PC-3 (cell line): ENCODE measurements at regions of chr16 and their contacts with region 1.

Region 1: GRCh38 chr16:71669932-71670536 is 44.0 kb downstream of the MARVELD3 start:
- DNase-seq: no peak
- ATAC-seq: no peak
- H3K4me3 ChIP-seq: no peak overlapping the region
- H3K27ac ChIP-seq: no peak overlapping the region
- H3K4me1 ChIP-seq: peaks cover 7% of the 10 kb centered on the region; the same call in 1 of the 2 replicates
- H3K27me3 ChIP-seq: no peaks in the 10 kb centered on the region
- CTCF ChIP-seq: no peak

Region 2: GRCh38 chr16:71626858-71627213 is 43.2 kb before region 1 on chr16:
- CTCF ChIA-PET with region 1: no interaction called
- POLR2A ChIA-PET with region 1: interaction called, 12 read pairs
- intact Hi-C with region 1: no loop called
- DNase-seq: no peak
- ATAC-seq: peak; percentile 13; the same call in 1 of the 2 replicates
- H3K4me3 ChIP-seq: peak overlapping the region; percentile 91
- H3K27ac ChIP-seq: no peak overlapping the region
- H3K4me1 ChIP-seq: 0 out of 2 replicates have a peak, but pooled peaks cover 6% of the 10 kb centered on the region
- H3K27me3 ChIP-seq: no peaks in the 10 kb centered on the region
- CTCF ChIP-seq: no peak

Region 3: GRCh38 chr16:71746442-71747046 is 76.5 kb after region 1 on chr16:
- CTCF ChIA-PET with region 1: no interaction called
- POLR2A ChIA-PET with region 1: no interaction called
- intact Hi-C with region 1: loop called (anchors 10 kb)
- DNase-seq: peak; percentile 57
- ATAC-seq: no peak
- H3K4me3 ChIP-seq: no peak overlapping the region
- H3K27ac ChIP-seq: no peak overlapping the region
- H3K4me1 ChIP-seq: no peaks in the 10 kb centered on the region
- H3K27me3 ChIP-seq: no peaks in the 10 kb centered on the region
- CTCF ChIP-seq: peak; percentile 70